Mammary epithelial cell (primary cell): ENCODE measurements at regions of chr11 and their contacts with region 1.

Region 1: GRCh38 chr11:74739546-74740270 is 8.5 kb upstream of the CHRDL2 start:
- DNase-seq: peak; percentile 60
- H3K4me3 ChIP-seq: no peak overlapping the region
- H3K27ac ChIP-seq: no peak overlapping the region
- H3K4me1 ChIP-seq: no peaks in the 10 kb centered on the region
- H3K27me3 ChIP-seq: peaks cover 5% of the 10 kb centered on the region
- CTCF ChIP-seq: peak; percentile 91 to 94

Region 2: DNA sequence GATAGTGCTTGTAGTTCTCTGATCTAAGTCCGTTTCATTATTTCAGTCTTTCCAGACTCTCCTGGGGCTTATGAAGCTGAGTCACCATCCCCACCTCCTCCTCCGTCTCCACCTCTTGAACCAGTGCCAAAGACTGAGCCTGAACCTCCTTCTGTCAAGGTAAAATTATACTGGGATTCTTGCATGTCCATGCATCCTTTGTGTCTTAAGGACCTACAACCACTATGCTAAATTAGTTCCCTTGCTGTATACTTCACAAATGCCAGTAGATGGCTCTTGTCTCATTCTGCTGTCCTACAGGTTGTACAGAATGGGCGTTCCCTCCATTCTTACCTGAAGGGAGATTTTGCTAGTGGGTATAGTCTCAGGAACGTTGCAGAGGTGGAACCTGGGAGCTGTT is 105.2 kb before region 1 on chr11:
- CTCF ChIA-PET with region 1: interaction called, 5 read pairs
- dilution Hi-C with region 1: no loop called
- in situ Hi-C with region 1: loop called in 1 of 2 experiments (anchors 10 kb)
- intact Hi-C with region 1: loop called (anchors 1 kb)
- DNase-seq: peak; percentile 93
- H3K4me3 ChIP-seq: no peak overlapping the region
- H3K27ac ChIP-seq: no peak overlapping the region
- H3K4me1 ChIP-seq: peaks cover 58% of the 10 kb centered on the region
- H3K27me3 ChIP-seq: no peaks in the 10 kb centered on the region
- CTCF ChIP-seq: peak; percentile 55 to 74

Region 3: DNA sequence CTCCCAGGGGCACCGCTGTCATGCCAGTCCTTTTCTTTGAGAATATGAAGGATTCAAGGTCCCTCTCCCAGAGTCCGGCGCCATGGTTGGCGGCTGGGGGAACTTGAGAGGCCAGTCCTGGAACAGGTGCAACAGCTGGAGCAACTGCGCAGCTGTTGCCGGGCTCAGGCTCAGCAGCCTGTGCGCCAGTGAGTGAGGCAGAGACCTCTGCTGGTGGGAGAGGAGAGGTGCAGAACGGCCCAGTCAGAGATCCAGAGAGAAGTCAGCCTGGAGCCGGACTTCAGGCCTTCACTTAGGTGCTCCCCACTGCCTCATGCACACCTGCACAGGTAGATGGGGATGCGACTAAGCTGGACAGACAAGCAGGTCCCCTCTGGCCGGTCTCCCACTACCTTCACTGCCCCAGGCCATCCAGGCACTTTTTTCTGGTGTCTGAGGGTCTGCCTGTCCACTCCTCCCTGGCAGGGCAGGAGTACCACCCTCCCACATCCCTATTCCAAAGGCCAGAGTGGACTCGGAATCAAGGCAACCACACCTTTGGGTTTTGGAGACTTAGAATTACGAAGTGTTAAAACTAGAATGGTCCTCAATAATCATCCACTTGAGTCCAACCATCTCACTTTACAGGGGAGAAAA is 13.0 kb before region 1 on chr11:
- CTCF ChIA-PET with region 1: no interaction called
- dilution Hi-C with region 1: no loop called
- in situ Hi-C with region 1: no loop called
- intact Hi-C with region 1: no loop called
- DNase-seq: peak; percentile 55
- H3K4me3 ChIP-seq: no peak overlapping the region
- H3K27ac ChIP-seq: no peak overlapping the region
- H3K4me1 ChIP-seq: no peaks in the 10 kb centered on the region
- H3K27me3 ChIP-seq: peaks cover 18% of the 10 kb centered on the region
- CTCF ChIP-seq: peak; percentile 83 to 99

Region 4: GRCh38 chr11:74773481-74773880 is 33.8 kb after region 1 on chr11:
- CTCF ChIA-PET with region 1: no interaction called
- dilution Hi-C with region 1: no loop called
- in situ Hi-C with region 1: no loop called
- intact Hi-C with region 1: no loop called
- DNase-seq: no peak
- H3K4me3 ChIP-seq: no peak overlapping the region
- H3K27ac ChIP-seq: no peak overlapping the region
- H3K4me1 ChIP-seq: no peaks in the 10 kb centered on the region
- H3K27me3 ChIP-seq: no peaks in the 10 kb centered on the region
- CTCF ChIP-seq: no peak